ENCODE measurements at regions of chr1 and their contacts with region 1.

Region 1: GRCh38 chr1:54944610-54945544 is 35.6 kb upstream of the TMEM61 start:
- DNase-seq: peak; percentile 31 to 95 (median 74)

Region 2: GRCh38 chr1:54886724-54887664 is 57.9 kb before region 1 on chr1 and contains the start of gene DHCR24:
- intact Hi-C with region 1: loop called (anchors 10 kb)
- DNase-seq: peak; percentile 87 to 99 (median 94)